ENCODE measurements at regions of chr2 and their contacts with region 1.

Region 1: GRCh38 chr2:25309402-25309801 is 32.3 kb downstream of the DNMT3A start:
- DNase-seq: peak; percentile 53 to 60 (median 58)
- H3K4me3 ChIP-seq: no peak overlapping the region
- H3K4me3 Mint-ChIP-seq: no peak overlapping the region
- H3K27ac ChIP-seq: no peak overlapping the region
- H3K27ac Mint-ChIP-seq: peak overlapping the region in 6 of 7 donors; percentile 55 to 88 (median 75)
- H3K4me1 ChIP-seq: peaks cover 88% of the 10 kb centered on the region
- H3K4me1 Mint-ChIP-seq: peaks cover 33 to 90% (median 65%) of the 10 kb centered on the region in 4 donors
- H3K27me3 ChIP-seq: no peaks in the 10 kb centered on the region
- H3K27me3 Mint-ChIP-seq: no peaks in the 10 kb centered on the region

Region 2: GRCh38 chr2:25286025-25286400 is 23.4 kb before region 1 on chr2:
- CTCF ChIA-PET with region 1: interaction called, 14 read pairs
- POLR2A ChIA-PET with region 1: interaction called, 36 read pairs
- intact Hi-C with region 1: no loop called
- DNase-seq: peak; percentile 68 to 83 (median 75)
- H3K4me3 ChIP-seq: peak overlapping the region in 1 of 2 donors; percentile 21
- H3K4me3 Mint-ChIP-seq: peak overlapping the region; percentile 17 to 91 (median 76)
- H3K27ac ChIP-seq: peak overlapping the region; percentile 63
- H3K27ac Mint-ChIP-seq: peak overlapping the region; percentile 85 to 99 (median 97)
- H3K4me1 ChIP-seq: peaks cover 41% of the 10 kb centered on the region
- H3K4me1 Mint-ChIP-seq: peaks cover 18 to 50% (median 30%) of the 10 kb centered on the region in 4 donors
- H3K27me3 ChIP-seq: no peaks in the 10 kb centered on the region
- H3K27me3 Mint-ChIP-seq: no peaks in the 10 kb centered on the region

Region 3: DNA sequence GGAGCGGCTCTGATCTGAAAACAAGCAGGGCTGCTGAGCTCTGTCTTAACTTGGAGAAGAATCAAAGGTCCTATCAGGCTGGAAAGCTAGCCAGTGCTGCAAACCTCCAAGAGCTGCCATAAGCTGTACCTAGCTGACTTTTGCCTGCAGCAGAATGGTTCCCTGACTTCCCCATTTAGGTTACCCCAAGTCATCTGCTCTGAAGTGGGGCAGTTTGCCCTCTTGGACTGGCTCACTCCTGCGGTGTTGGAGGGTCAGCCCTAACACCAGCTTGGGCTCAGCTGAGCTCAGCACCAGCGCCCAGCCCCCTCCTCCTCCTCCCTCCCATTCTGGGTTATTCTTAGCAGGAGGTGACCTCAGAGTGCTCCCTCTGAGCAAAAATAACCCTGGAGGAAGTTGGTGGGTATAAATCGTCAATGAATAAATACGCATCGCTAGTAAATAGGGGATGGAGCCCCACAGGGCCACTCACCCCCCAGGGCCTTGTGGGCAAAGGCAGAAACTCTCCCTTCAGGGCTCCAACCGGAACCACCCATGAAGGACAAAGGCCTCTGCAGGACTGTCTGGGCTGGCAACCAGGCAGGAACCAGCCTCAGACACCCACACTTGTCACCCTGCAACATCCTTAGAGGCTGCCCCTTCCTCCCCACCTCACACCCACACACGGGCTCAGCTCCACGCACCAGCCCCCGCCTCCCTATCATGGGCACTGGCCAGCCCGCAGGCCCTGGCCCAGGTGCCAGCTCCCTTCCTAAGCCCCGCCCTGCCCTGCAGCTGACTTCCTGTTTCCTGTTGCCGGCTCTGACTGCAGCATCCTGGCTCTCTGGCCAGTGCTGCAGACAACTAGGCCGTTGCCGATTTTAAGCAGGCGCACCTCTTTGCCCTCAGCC is 14.6 kb before region 1 on chr2:
- CTCF ChIA-PET with region 1: interaction called, 23 read pairs
- POLR2A ChIA-PET with region 1: interaction called, 37 read pairs
- intact Hi-C with region 1: no loop called
- DNase-seq: peak; percentile 73 to 90 (median 76)
- H3K4me3 ChIP-seq: peak overlapping the region; percentile 32 to 39
- H3K4me3 Mint-ChIP-seq: peak overlapping the region; percentile 72 to 90 (median 82)
- H3K27ac ChIP-seq: peak overlapping the region; percentile 69
- H3K27ac Mint-ChIP-seq: peak overlapping the region; percentile 86 to 97 (median 93)
- H3K4me1 ChIP-seq: peaks cover 52% of the 10 kb centered on the region
- H3K4me1 Mint-ChIP-seq: peaks cover 28 to 43% (median 37%) of the 10 kb centered on the region in 4 donors
- H3K27me3 ChIP-seq: no peaks in the 10 kb centered on the region
- H3K27me3 Mint-ChIP-seq: no peaks in the 10 kb centered on the region

Region 4: DNA sequence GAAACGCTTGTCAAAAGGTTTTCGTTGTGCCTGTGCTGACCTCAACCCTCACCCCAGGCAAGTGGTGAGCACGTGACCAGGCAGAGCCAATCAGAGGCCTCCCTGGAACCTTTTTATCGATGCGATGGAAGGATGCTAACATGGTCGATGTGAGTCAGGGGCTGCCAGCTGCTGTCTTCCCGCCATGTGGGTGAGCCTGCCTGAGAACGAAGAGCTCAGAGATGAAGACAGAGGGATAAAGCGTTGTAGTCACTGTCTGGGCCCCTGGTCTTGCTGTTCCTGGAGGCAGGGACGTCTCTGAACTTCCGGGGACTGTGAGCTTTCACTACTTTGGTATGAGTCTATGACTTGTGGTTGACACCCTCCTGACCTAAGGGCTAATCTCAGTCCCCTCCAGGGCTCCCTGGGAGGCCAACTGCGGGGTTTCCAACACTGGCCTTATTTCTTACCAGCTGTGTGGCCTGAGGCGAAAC is 13.7 kb after region 1 on chr2:
- CTCF ChIA-PET with region 1: interaction called, 22 read pairs
- POLR2A ChIA-PET with region 1: interaction called, 26 read pairs
- intact Hi-C with region 1: no loop called
- DNase-seq: peak; percentile 51 to 79 (median 64)
- H3K4me3 ChIP-seq: peak overlapping the region in 1 of 2 donors; percentile 46
- H3K4me3 Mint-ChIP-seq: peak overlapping the region; percentile 85 to 91 (median 88)
- H3K27ac ChIP-seq: peak overlapping the region; percentile 53
- H3K27ac Mint-ChIP-seq: peak overlapping the region; percentile 81 to 98 (median 94)
- H3K4me1 ChIP-seq: peaks cover 33% of the 10 kb centered on the region
- H3K4me1 Mint-ChIP-seq: peaks cover 33 to 51% (median 39%) of the 10 kb centered on the region in 4 donors
- H3K27me3 ChIP-seq: no peaks in the 10 kb centered on the region
- H3K27me3 Mint-ChIP-seq: no peaks in the 10 kb centered on the region

Region 5: DNA sequence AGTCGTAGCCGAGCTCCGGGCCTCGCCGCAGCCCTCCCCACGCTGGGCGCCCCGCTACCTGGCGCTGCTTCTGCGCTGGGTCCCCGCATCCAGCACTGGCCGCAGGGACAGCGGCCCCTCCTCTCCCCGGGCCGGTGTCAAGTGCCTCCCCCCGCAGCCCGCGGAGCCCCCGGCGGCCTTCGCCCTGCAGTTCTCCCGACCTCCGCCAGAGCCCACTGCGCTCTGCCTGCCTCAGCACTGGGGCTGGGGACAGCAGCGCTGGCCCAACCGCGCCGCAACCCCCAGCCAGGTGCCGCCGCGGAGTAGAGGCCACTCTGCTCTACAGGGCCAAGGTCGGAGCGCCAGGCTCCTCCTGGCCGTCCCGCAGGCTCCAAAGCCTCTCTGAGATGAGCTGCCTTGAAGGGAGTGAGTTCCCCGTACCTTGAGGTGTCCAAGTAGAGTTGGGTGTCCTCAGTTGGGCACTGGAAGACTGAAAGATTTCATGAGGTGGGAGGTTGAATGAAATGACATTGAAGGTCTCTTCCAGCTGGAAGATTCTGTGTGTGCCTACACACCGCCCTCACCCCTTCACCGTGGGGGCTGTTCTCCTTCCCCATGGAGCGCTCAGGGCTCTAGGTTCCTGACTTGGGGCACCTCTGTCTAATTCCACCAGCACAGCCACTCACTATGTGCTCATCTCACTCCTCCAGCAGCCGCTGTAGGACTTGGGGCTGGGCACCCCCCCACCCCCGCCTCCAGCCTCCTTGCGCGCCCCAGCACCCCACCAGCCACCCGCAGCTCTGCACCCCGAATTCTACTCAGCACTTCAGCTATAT is 33.2 kb after region 1 on chr2:
- CTCF ChIA-PET with region 1: interaction called, 9 read pairs
- POLR2A ChIA-PET with region 1: interaction called, 24 read pairs
- intact Hi-C with region 1: loop called (anchors 1 kb)
- DNase-seq: peak; percentile 78 to 83 (median 81)
- H3K4me3 ChIP-seq: peak overlapping the region in 1 of 2 donors; percentile 52
- H3K4me3 Mint-ChIP-seq: peak overlapping the region; percentile 66 to 89 (median 82)
- H3K27ac ChIP-seq: no peak overlapping the region
- H3K27ac Mint-ChIP-seq: peak overlapping the region in 3 of 7 donors; percentile 74 to 84 (median 74)
- H3K4me1 ChIP-seq: peaks cover 34% of the 10 kb centered on the region
- H3K4me1 Mint-ChIP-seq: peaks cover 10 to 35% (median 23%) of the 10 kb centered on the region in 4 donors
- H3K27me3 ChIP-seq: no peaks in the 10 kb centered on the region
- H3K27me3 Mint-ChIP-seq: no peaks in the 10 kb centered on the region

Region 6: GRCh38 chr2:25376750-25377621 is 67.6 kb after region 1 on chr2:
- CTCF ChIA-PET with region 1: interaction called, 18 read pairs
- POLR2A ChIA-PET with region 1: interaction called, 4 read pairs
- intact Hi-C with region 1: loop called (anchors 1 kb)
- DNase-seq: peak; percentile 92 to 95 (median 92)
- H3K4me3 ChIP-seq: peak overlapping the region in 1 of 2 donors; percentile 36
- H3K4me3 Mint-ChIP-seq: peak overlapping the region; percentile 48 to 85 (median 74)
- H3K27ac ChIP-seq: peak overlapping the region; percentile 57
- H3K27ac Mint-ChIP-seq: peak overlapping the region; percentile 90 to 96 (median 94)
- H3K4me1 ChIP-seq: peaks cover 38% of the 10 kb centered on the region
- H3K4me1 Mint-ChIP-seq: peaks cover 19 to 36% (median 23%) of the 10 kb centered on the region in 4 donors
- H3K27me3 ChIP-seq: no peaks in the 10 kb centered on the region
- H3K27me3 Mint-ChIP-seq: no peaks in the 10 kb centered on the region

Region 7: GRCh38 chr2:25521665-25522387 is 212.4 kb after region 1 on chr2:
- CTCF ChIA-PET with region 1: no interaction called
- POLR2A ChIA-PET with region 1: no interaction called
- intact Hi-C with region 1: loop called (anchors 1 kb)
- DNase-seq: peak; percentile 68 to 76 (median 72)
- H3K4me3 ChIP-seq: no peak overlapping the region
- H3K4me3 Mint-ChIP-seq: peak overlapping the region in 6 of 8 donors; percentile 4 to 75 (median 21)
- H3K27ac ChIP-seq: no peak overlapping the region
- H3K27ac Mint-ChIP-seq: peak overlapping the region in 5 of 7 donors; percentile 48 to 80 (median 54)
- H3K4me1 ChIP-seq: peaks cover 10% of the 10 kb centered on the region
- H3K4me1 Mint-ChIP-seq: peaks cover 4 to 12% (median 7%) of the 10 kb centered on the region in 4 donors
- H3K27me3 ChIP-seq: no peaks in the 10 kb centered on the region
- H3K27me3 Mint-ChIP-seq: no peaks in the 10 kb centered on the region

Measured in CD4-positive, alpha-beta memory T cell (primary cell).